ENCODE measurements at regions of chr16 and their contacts with region 1.

Region 1: GRCh38 chr16:82263521-82264143 is 93.6 kb upstream of the MPHOSPH6 start:
- DNase-seq: peak; percentile 42
- ATAC-seq: peak; percentile 94

Region 2: DNA sequence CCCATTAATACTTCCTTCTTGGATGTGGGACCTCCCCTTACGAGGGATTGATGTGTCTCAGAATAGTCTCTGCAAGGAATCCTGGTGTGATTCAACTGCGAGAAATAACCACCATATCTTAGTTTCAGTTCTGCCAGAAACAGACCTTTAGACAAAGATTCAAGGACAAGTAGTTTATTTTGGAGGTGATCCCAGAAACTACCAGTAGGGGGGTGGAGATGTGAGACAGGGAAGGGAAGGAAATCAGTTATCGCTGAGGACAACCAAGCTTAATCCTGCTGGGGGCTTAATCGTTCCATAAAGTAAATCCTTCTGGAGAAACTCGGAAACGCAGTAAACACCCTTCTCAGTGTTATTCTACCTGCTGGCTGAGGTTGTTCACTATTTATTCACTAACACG is 247.4 kb before region 1 on chr16:
- intact Hi-C with region 1: no loop called
- DNase-seq: no peak
- ATAC-seq: no peak

Region 3: GRCh38 chr16:82344157-82344556 is 80.5 kb after region 1 on chr16:
- intact Hi-C with region 1: loop called (anchors 2 kb)
- DNase-seq: no peak
- ATAC-seq: peak; percentile 91

Region 4: GRCh38 chr16:82456683-82457082 is 193.1 kb after region 1 on chr16:
- intact Hi-C with region 1: loop called (anchors 5 kb)
- DNase-seq: peak; percentile 58
- ATAC-seq: peak; percentile 90

Region 5: GRCh38 chr16:82580298-82580890 is 316.8 kb after region 1 on chr16:
- intact Hi-C with region 1: loop called (anchors 10 kb)
- DNase-seq: no peak
- ATAC-seq: peak; percentile 74

Region 6: GRCh38 chr16:83441517-83441916 is 1177.9 kb after region 1 on chr16:
- intact Hi-C with region 1: loop called (anchors 10 kb)
- DNase-seq: no peak
- ATAC-seq: no peak

Measured in Right ventricle myocardium superior (tissue), 1 donor.